Caco-2 (cell line): ENCODE measurements at regions of chr3 and their contacts with region 1.

Region 1: GRCh38 chr3:184469423-184469822 is 89.6 kb downstream of the CHRD start:
- DNase-seq: peak; percentile 60 to 63
- H3K4me3 ChIP-seq: no peak overlapping the region
- H3K4me3 Mint-ChIP-seq: no peak overlapping the region
- H3K27ac Mint-ChIP-seq: no peak overlapping the region
- H3K4me1 ChIP-seq: 0 out of 2 replicates have a peak, but pooled peaks cover 6% of the 10 kb centered on the region
- H3K4me1 Mint-ChIP-seq: no peaks in the 10 kb centered on the region
- H3K27me3 ChIP-seq: no peaks in the 10 kb centered on the region
- H3K27me3 Mint-ChIP-seq: peaks cover 5% of the 10 kb centered on the region
- CTCF ChIP-seq: peak; percentile 77 to 78

Region 2: GRCh38 chr3:184428561-184429175 is 40.8 kb before region 1 on chr3:
- CTCF ChIA-PET with region 1: no interaction called
- POLR2A ChIA-PET with region 1: no interaction called
- intact Hi-C with region 1: no loop called
- DNase-seq: no peak
- H3K4me3 ChIP-seq: no peak overlapping the region
- H3K4me3 Mint-ChIP-seq: no peak overlapping the region
- H3K27ac Mint-ChIP-seq: no peak overlapping the region
- H3K4me1 ChIP-seq: no peaks in the 10 kb centered on the region
- H3K4me1 Mint-ChIP-seq: no peaks in the 10 kb centered on the region
- H3K27me3 ChIP-seq: no peaks in the 10 kb centered on the region
- H3K27me3 Mint-ChIP-seq: no peaks in the 10 kb centered on the region
- CTCF ChIP-seq: no peak

Region 3: GRCh38 chr3:184513276-184514170 is 44.1 kb after region 1 on chr3:
- CTCF ChIA-PET with region 1: interaction called, 11 read pairs
- POLR2A ChIA-PET with region 1: no interaction called
- intact Hi-C with region 1: loop called (anchors 1 kb)
- DNase-seq: peak; percentile 84 to 90
- H3K4me3 ChIP-seq: peak overlapping the region; percentile 59
- H3K4me3 Mint-ChIP-seq: peak overlapping the region; percentile 33
- H3K27ac Mint-ChIP-seq: no peak overlapping the region
- H3K4me1 ChIP-seq: no peaks in the 10 kb centered on the region
- H3K4me1 Mint-ChIP-seq: no peaks in the 10 kb centered on the region
- H3K27me3 ChIP-seq: no peaks in the 10 kb centered on the region
- H3K27me3 Mint-ChIP-seq: peaks cover 15% of the 10 kb centered on the region
- CTCF ChIP-seq: peak; percentile 87